ENCODE measurements at regions of chr16 and their contacts with region 1.

Region 1: GRCh38 chr16:31179747-31180459 is at the start of gene FUS:
- DNase-seq: peak; percentile 94 to 97 (median 94)
- ATAC-seq: peak; percentile 75
- H3K4me3 ChIP-seq: peak within 1 kb of the TSS; percentile 81
- H3K27ac ChIP-seq: peak within 1 kb of the TSS; percentile 100
- H3K4me1 ChIP-seq: peaks cover 18 to 21% of the 10 kb centered on the region in 2 experiments
- H3K27me3 ChIP-seq: no peaks in the 10 kb centered on the region; a peak in 1 of 5 replicates
- CTCF ChIP-seq: peak in 2 of 3 experiments; percentile 4 to 5; a peak in 1 of 6 replicates
- EP300 ChIP-seq: no peak
- POLR2A ChIP-seq: peak; percentile 100
- RAD21 ChIP-seq: peak; percentile 2 to 25; a peak in 1 of 4 replicates
- polyA plus RNA-seq, gene FUS: 43.9 to 59.5 TPM

Region 2: GRCh38 chr16:30984669-30985400 is 195.1 kb before region 1 on chr16 and contains the start of gene HSD3B7:
- CTCF ChIA-PET with region 1: no interaction called
- POLR2A ChIA-PET with region 1: interaction called, 27 read pairs
- in situ Hi-C with region 1: no loop called
- intact Hi-C with region 1: no loop called
- DNase-seq: peak; percentile 92 to 95 (median 93)
- ATAC-seq: peak; percentile 95
- H3K4me3 ChIP-seq: peak within 1 kb of the TSS; percentile 44
- H3K27ac ChIP-seq: peak within 1 kb of the TSS; percentile 51
- H3K4me1 ChIP-seq: peaks cover 7 to 68% of the 10 kb centered on the region in 2 experiments; a peak in 4 of 5 replicates
- H3K27me3 ChIP-seq: no peaks in the 10 kb centered on the region
- CTCF ChIP-seq: peak; percentile 90 to 95 (median 92)
- EP300 ChIP-seq: peak; percentile 7; the same call in 1 of the 2 replicates
- POLR2A ChIP-seq: peak; percentile 58
- RAD21 ChIP-seq: peak; percentile 91 to 92
- polyA plus RNA-seq, gene HSD3B7: 5.4 to 6.7 TPM

Region 3: GRCh38 chr16:31073968-31074813 is 105.7 kb before region 1 on chr16 and contains the starts of genes ZNF646 and ZNF668:
- CTCF ChIA-PET with region 1: no interaction called
- POLR2A ChIA-PET with region 1: interaction called, 21 read pairs
- in situ Hi-C with region 1: no loop called
- intact Hi-C with region 1: no loop called
- DNase-seq: peak; percentile 92 to 99 (median 94)
- ATAC-seq: peak; percentile 91
- H3K4me3 ChIP-seq: peak within 1 kb of the TSS; percentile 79
- H3K27ac ChIP-seq: peak within 1 kb of the TSS; percentile 88
- H3K4me1 ChIP-seq: peaks cover 11 to 34% of the 10 kb centered on the region in 2 experiments; a peak in 4 of 5 replicates
- H3K27me3 ChIP-seq: no peaks in the 10 kb centered on the region
- CTCF ChIP-seq: no peak
- EP300 ChIP-seq: peak; percentile 45
- POLR2A ChIP-seq: peak; percentile 97
- RAD21 ChIP-seq: no peak
- polyA plus RNA-seq, gene ZNF646: 0.08 to 0.10 TPM
- polyA plus RNA-seq, gene ZNF668: 0.04 TPM in 1 of 2 experiments, not detected in the other

Region 4: DNA sequence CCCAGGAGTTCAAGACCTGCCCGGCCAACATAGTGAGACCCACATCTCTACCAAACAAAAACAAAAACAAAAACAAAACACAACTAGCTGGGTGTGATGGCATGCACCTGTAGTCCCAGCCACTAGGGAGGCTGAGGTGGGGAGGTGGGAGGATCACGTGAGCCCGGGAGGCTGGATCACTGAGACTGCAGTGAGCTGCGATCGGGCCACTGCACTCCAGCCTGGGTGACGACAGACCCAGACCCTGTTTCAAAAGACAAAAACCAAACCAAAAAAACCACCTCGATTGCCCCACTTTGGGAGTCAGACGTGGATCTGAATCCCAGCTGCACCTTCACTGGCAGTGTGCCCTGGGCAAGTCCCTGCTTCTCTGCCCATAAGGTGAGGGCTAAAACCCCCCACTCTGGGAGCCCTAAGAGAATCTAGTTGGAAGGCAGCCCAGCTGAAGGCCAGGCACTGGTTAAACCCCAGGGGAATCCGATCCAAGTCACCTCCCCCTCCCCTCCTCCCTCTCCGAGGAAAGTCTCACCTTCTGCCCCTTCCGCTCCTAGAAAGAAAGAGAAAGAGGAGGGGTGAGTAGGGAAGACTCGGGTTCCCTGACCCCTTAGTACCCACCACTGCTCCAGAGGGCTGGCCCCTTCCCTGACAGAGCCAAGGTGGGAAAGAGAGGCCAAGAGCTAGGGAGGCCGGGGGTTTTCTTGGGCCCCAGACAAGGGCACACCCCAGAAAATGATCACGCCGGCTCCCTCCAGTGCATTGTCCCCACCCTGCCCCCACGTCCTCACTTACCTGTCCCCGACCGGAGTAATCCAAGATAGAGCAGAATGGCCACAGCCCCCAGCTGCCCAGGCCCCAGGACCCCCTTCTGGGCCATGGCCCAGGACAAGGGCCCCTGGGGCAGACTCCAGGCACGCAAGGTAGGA is 45.0 kb before region 1 on chr16:
- CTCF ChIA-PET with region 1: no interaction called
- POLR2A ChIA-PET with region 1: interaction called, 39 read pairs
- in situ Hi-C with region 1: no loop called
- intact Hi-C with region 1: no loop called
- DNase-seq: peak in 2 of 4 experiments; percentile 19 to 48
- ATAC-seq: peak; percentile 81
- H3K4me3 ChIP-seq: peak overlapping the region; percentile 26; the same call in 1 of the 2 replicates
- H3K27ac ChIP-seq: peak overlapping the region; percentile 41; the same call in 1 of the 3 replicates
- H3K4me1 ChIP-seq: peaks cover 31 to 79% of the 10 kb centered on the region in 2 experiments
- H3K27me3 ChIP-seq: no peaks in the 10 kb centered on the region
- CTCF ChIP-seq: no peak
- EP300 ChIP-seq: no peak
- POLR2A ChIP-seq: no peak
- RAD21 ChIP-seq: no peak

Region 5: GRCh38 chr16:31168848-31169247 is 11.1 kb before region 1 on chr16:
- CTCF ChIA-PET with region 1: no interaction called
- POLR2A ChIA-PET with region 1: interaction called, 31 read pairs
- in situ Hi-C with region 1: no loop called
- intact Hi-C with region 1: no loop called
- DNase-seq: no peak
- ATAC-seq: no peak
- H3K4me3 ChIP-seq: no peak overlapping the region
- H3K27ac ChIP-seq: no peak overlapping the region
- H3K4me1 ChIP-seq: peaks cover 0 to 3% of the 10 kb centered on the region in 2 experiments; a peak in 3 of 5 replicates
- H3K27me3 ChIP-seq: no peaks in the 10 kb centered on the region
- CTCF ChIP-seq: no peak
- EP300 ChIP-seq: no peak
- POLR2A ChIP-seq: no peak
- RAD21 ChIP-seq: no peak

Region 6: DNA sequence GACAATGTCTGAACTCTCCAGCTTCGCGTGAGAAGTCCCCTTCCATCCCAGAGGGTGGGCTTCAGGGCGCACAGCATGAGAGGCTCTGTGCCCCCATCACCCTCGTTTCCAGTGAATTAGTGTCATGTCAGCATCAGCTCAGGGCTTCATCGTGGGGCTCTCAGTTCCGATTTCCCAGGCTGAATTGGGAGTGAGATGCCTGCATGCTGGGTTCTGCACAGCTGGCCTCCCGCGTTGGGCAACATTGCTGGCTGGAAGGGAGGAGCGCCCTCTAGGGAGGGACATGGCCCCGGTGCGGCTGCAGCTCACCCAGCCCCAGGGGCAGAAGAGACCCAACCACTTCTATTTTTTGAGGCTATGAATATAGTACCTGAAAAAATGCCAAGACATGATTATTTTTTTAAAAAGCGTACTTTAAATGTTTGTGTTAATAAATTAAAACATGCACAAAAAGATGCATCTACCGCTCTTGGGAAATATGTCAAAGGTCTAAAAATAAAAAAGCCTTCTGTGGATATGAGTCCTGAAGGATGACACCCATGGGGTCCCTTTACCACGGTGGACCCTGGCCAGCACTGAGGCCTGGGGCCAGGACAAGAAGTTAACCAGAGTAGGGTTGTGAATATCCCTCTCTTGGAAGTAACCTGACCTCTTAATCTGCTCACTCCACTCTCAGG is 202.7 kb after region 1 on chr16:
- CTCF ChIA-PET with region 1: no interaction called
- POLR2A ChIA-PET with region 1: interaction called, 10 read pairs
- in situ Hi-C with region 1: no loop called
- intact Hi-C with region 1: no loop called
- DNase-seq: peak; percentile 71 to 82 (median 72)
- ATAC-seq: peak; percentile 96
- H3K4me3 ChIP-seq: no peak overlapping the region
- H3K27ac ChIP-seq: no peak overlapping the region
- H3K4me1 ChIP-seq: peaks cover 0 to 5% of the 10 kb centered on the region in 2 experiments; a peak in 2 of 5 replicates
- H3K27me3 ChIP-seq: peaks cover 3 to 34% of the 10 kb centered on the region in 2 experiments; a peak in 4 of 5 replicates
- CTCF ChIP-seq: peak; percentile 82 to 90 (median 86)
- EP300 ChIP-seq: no peak
- POLR2A ChIP-seq: no peak
- RAD21 ChIP-seq: peak; percentile 56 to 83